Mammary epithelial cell (primary cell): ENCODE measurements at regions of chr3 and their contacts with region 1.

Region 1: DNA sequence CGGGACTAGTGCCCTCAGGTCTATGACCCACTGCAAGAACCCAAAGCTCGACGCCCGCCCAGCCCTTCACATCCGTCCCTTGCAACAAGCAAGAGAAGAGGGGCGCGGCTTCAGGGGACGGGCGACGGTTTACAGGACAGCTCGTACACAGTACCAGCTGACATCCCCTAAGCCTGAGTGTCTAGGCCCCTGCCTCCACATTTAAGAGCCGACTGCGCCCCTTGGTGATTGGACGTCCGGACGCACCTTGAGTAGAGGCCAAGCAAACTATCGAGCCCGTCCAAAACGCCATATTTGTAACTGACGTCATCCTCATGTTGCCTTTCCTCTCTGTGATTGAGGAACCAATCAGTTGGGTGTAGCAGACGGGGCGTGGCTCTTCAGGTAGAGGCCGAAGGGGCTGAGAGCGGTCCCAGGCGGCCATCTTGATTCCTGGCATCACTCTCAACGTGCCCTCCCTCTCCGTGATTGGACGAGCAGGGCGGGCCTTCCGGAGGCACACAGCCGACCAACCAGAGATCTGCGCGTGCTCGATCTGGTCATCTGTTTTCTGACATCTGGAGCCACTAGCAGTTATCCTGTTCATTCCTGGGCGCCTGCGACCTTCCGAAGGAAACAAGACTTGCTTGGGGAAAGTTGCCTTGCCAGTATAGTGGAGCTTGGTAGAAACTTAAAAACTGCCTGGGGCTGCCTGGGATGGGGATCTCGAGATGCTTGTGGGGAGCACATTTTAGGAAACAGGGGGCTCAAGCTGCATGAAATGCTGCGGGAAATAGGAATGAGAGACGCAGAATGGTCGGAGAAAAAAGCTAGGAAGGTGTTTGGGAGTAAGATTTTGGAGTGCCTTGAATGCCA is 4.0 kb upstream of the RPL14 start:
- DNase-seq: peak; percentile 99
- H3K4me3 ChIP-seq: peak overlapping the region; percentile 54 to 72 (median 72)
- H3K27ac ChIP-seq: peak overlapping the region; percentile 79
- H3K4me1 ChIP-seq: peaks cover 22% of the 10 kb centered on the region
- H3K27me3 ChIP-seq: no peaks in the 10 kb centered on the region
- CTCF ChIP-seq: no peak

Region 2: GRCh38 chr3:40329071-40329470 is 124.0 kb before region 1 on chr3:
- CTCF ChIA-PET with region 1: no interaction called
- dilution Hi-C with region 1: no loop called
- in situ Hi-C with region 1: no loop called
- intact Hi-C with region 1: loop called (anchors 5 kb)
- DNase-seq: no peak
- H3K4me3 ChIP-seq: no peak overlapping the region
- H3K27ac ChIP-seq: no peak overlapping the region
- H3K4me1 ChIP-seq: no peaks in the 10 kb centered on the region
- H3K27me3 ChIP-seq: no peaks in the 10 kb centered on the region
- CTCF ChIP-seq: no peak

Region 3: DNA sequence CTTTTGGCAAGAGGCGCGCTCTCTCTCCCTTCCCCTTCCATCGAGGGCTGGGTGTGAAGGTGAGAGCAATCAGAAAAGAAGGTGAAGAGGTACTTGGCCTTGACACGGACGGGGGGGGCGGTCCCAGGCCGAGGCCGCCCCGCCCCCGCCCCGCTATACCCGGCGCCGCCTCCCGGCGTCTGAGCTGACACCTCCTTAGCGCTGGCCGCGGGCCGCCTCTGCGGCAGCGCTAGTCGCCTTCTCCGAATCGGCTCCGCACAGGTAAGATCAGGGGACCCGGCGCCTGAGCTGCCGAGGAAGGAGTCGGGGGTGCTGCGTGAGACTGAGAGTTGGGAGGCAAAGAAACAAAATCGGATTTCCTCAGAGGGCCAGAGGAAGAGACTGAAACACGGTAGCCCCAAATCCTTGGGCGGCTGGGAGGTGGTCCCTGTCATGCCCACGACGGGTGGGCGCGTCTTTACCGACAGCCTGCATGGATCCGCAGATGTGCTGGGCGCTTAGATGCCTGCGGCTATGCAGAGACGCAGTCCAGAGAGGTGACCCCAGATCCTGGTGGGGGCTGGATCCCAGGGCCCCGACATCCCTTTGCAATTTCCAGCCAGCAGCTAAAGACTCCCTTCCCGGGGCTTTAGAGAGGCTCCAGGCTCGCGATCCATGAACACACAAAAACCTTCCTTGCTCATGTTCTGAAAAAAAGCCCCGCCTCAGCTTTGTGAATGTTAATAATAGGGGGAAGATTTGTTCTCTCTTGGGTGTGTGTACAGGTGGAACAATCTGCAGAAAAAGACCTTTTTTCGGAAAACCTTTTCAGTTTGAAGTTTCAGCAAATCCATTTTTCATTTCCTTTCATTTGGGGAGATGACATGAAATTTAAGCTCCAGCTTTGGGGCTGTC is 65.9 kb before region 1 on chr3 and contains the start of gene ENTPD3:
- CTCF ChIA-PET with region 1: interaction called, 7 read pairs
- dilution Hi-C with region 1: no loop called
- in situ Hi-C with region 1: no loop called
- intact Hi-C with region 1: loop called (anchors 2 kb)
- DNase-seq: peak; percentile 39
- H3K4me3 ChIP-seq: peak within 1 kb of the TSS; percentile 46 to 51 (median 48)
- H3K27ac ChIP-seq: no peak within 1 kb of the TSS
- H3K4me1 ChIP-seq: peaks cover 10% of the 10 kb centered on the region
- H3K27me3 ChIP-seq: no peaks in the 10 kb centered on the region
- CTCF ChIP-seq: peak in 1 of 2 donors; percentile 2
- total RNA-seq, gene ENTPD3: 4.8 to 11.5 TPM

Region 4: GRCh38 chr3:40524568-40525285 is 71.6 kb after region 1 on chr3 and contains the start of gene ZNF621:
- CTCF ChIA-PET with region 1: no interaction called
- dilution Hi-C with region 1: no loop called
- in situ Hi-C with region 1: no loop called
- intact Hi-C with region 1: loop called (anchors 1 kb)
- DNase-seq: peak; percentile 84
- H3K4me3 ChIP-seq: peak within 1 kb of the TSS; percentile 76 to 84 (median 78)
- H3K27ac ChIP-seq: peak within 1 kb of the TSS; percentile 84
- H3K4me1 ChIP-seq: peaks cover 13% of the 10 kb centered on the region
- H3K27me3 ChIP-seq: no peaks in the 10 kb centered on the region
- CTCF ChIP-seq: no peak
- total RNA-seq, gene ZNF621: 20.0 to 32.4 TPM